Right cardiac atrium (tissue), 5 donors: ENCODE measurements at regions of chr1 and their contacts with region 1.

Region 1: GRCh38 chr1:37682334-37682987 is 9.9 kb upstream of the CDCA8 start:
- DNase-seq: peak; percentile 66 to 84 (median 74)
- ATAC-seq: peak; percentile 64
- H3K4me3 ChIP-seq: no peak overlapping the region
- H3K27ac ChIP-seq: no peak overlapping the region
- H3K4me1 ChIP-seq: no peaks in the 10 kb centered on the region
- H3K27me3 ChIP-seq: no peaks in the 10 kb centered on the region

Region 2: GRCh38 chr1:37449936-37450335 is 232.5 kb before region 1 on chr1:
- intact Hi-C with region 1: loop called in 3 of 4 experiments (anchors 5 to 10 kb)
- DNase-seq: no peak
- ATAC-seq: no peak
- H3K4me3 ChIP-seq: no peak overlapping the region
- H3K27ac ChIP-seq: no peak overlapping the region
- H3K4me1 ChIP-seq: no peaks in the 10 kb centered on the region
- H3K27me3 ChIP-seq: no peaks in the 10 kb centered on the region

Region 3: GRCh38 chr1:37602750-37603694 is 79.4 kb before region 1 on chr1:
- intact Hi-C with region 1: loop called in 3 of 4 experiments (anchors 5 kb)
- DNase-seq: no peak
- ATAC-seq: peak in 1 of 2 donors; percentile 55
- H3K4me3 ChIP-seq: no peak overlapping the region
- H3K27ac ChIP-seq: no peak overlapping the region
- H3K4me1 ChIP-seq: no peaks in the 10 kb centered on the region
- H3K27me3 ChIP-seq: no peaks in the 10 kb centered on the region

Region 4: GRCh38 chr1:37931361-37932158 is 249.1 kb after region 1 on chr1:
- intact Hi-C with region 1: no loop called
- DNase-seq: peak; percentile 97 to 99 (median 98)
- ATAC-seq: peak; percentile 98 to 99
- H3K4me3 ChIP-seq: peak overlapping the region; percentile 91
- H3K27ac ChIP-seq: peak overlapping the region; percentile 89
- H3K4me1 ChIP-seq: peaks cover 3% of the 10 kb centered on the region
- H3K27me3 ChIP-seq: no peaks in the 10 kb centered on the region